ENCODE measurements at regions of chr7 and their contacts with region 1.

Region 1: DNA sequence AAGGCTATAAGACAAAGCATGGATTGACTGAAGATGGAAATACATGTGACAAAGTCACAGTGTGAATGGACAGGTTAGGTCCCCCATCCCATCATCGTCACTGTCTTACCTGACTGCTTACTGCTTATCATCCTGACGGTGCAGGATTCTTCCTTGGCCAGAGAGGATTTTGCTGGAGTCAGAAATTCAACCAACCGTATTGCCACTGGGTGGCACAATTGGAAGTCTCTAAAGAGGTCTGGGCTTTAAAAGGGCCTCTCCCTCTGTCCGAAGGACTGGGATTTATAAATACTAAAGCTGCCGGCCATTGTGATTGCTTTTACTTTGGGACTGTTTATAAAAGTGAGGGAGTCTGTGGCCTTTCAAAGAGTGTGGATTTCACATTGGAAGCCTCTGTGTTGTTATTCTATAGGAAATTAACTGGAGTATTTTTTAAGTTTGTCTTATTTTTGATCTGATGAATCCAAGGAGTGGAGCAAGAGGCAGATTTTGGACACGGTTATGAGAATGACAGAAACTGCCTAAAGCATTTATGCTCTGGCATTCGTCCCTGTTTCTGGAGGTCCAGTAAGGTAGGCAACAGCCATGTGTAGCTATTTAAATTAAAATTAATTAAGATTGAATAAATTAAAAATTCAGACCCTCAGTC is 113.3 kb upstream of the CREB5 start:
- DNase-seq: no peak

Region 2: DNA sequence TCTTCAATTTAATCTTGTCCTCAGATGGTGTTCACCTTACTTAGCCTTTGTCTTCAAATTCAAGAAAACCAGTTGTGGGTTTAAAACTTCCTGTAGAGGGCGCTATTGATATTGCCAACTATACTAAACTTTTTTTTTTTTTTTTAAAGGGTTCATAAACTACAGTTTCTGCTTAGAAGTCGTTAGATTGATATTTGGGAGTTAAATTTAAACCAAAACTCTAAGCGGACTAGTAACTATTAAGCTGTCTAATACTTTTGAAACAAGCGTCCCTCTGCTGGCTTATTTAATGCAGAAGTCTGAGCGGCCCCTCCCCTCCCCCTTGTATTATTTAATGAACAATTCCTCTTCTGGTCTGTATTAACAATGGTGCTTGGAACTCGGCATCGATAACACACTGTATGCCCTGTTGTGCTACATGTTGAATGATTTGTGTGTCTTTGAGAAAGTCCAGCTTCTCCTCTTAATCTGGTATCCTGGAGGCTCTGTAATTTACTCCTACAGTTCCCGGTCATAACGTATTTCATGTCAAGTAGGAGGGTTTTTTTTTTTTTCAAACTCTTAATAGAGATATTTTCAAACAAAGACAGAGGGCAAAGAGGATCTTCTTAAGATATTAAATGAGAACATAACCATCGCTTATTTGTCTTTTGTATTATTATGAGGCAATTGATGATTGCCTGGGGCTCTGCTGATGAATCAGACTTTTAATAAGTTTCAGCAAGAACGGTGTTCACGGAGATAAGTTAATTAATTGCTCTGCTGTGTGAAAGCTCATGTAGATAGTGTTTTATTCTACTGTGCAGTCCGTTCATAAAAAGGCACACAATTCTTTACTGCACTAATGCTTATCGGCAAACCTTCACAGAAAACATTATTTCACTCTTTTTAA is 90.8 kb after region 1 on chr7:
- intact Hi-C with region 1: loop called (anchors 10 kb)
- DNase-seq: no peak